ENCODE measurements at regions of chr5 and their contacts with region 1.

Region 1: GRCh38 chr5:135578685-135579341 is at the start of gene CXCL14:
- DNase-seq: no peak
- H3K4me3 ChIP-seq: peak within 1 kb of the TSS; percentile 23 to 54 (median 49)
- H3K27ac ChIP-seq: no peak within 1 kb of the TSS
- H3K4me1 ChIP-seq: peaks cover 28% of the 10 kb centered on the region
- H3K27me3 ChIP-seq: peaks cover 31% of the 10 kb centered on the region
- CTCF ChIP-seq: no peak
- polyA plus RNA-seq, gene CXCL14: 14.0 to 613 TPM (median 124 TPM) in 3 replicates

Region 2: GRCh38 chr5:135116160-135116561 is 462.7 kb before region 1 on chr5:
- dilution Hi-C with region 1: no loop called
- DNase-seq: no peak
- H3K4me3 ChIP-seq: no peak overlapping the region
- H3K27ac ChIP-seq: no peak overlapping the region
- H3K4me1 ChIP-seq: no peaks in the 10 kb centered on the region
- H3K27me3 ChIP-seq: peaks cover 8% of the 10 kb centered on the region
- CTCF ChIP-seq: no peak

Region 3: DNA sequence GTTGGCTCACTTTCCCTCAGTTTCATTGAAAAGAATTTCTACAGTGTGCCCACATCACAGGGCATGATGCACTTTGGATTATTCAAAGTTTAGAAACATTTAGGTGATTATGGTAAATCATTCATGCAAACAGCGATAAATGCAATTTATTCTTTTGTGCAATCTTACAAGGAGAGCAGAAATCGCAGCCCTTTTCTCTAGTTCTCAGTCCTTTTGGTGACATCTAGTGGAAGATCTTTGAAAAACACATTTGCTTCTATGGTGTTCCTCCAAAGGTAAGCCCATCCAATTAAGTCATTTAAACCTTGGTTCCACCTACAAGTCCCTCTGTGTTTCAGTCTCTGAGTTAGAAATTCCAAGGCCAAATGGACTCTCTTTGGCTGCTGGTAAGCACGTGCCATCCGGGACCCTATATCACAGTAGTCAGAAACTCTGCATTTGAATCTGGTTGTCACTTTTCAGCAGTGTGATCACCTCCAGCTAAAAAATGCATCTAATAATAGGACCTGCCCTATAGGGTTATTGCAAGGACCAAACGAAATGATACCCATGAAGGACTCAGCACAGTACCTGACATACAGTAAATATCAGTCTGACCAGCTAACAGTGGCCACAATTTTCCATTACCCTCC is 246.2 kb before region 1 on chr5:
- dilution Hi-C with region 1: no loop called
- DNase-seq: peak; percentile 19
- H3K4me3 ChIP-seq: no peak overlapping the region
- H3K27ac ChIP-seq: no peak overlapping the region
- H3K4me1 ChIP-seq: peaks cover 5% of the 10 kb centered on the region
- H3K27me3 ChIP-seq: no peaks in the 10 kb centered on the region
- CTCF ChIP-seq: peak; percentile 1 to 59 (median 36)

Region 4: GRCh38 chr5:135437796-135438560 is 140.8 kb before region 1 on chr5:
- dilution Hi-C with region 1: no loop called
- DNase-seq: no peak
- H3K4me3 ChIP-seq: no peak overlapping the region
- H3K27ac ChIP-seq: no peak overlapping the region
- H3K4me1 ChIP-seq: peaks cover 4% of the 10 kb centered on the region
- H3K27me3 ChIP-seq: peaks cover 25% of the 10 kb centered on the region
- CTCF ChIP-seq: no peak

Region 5: DNA sequence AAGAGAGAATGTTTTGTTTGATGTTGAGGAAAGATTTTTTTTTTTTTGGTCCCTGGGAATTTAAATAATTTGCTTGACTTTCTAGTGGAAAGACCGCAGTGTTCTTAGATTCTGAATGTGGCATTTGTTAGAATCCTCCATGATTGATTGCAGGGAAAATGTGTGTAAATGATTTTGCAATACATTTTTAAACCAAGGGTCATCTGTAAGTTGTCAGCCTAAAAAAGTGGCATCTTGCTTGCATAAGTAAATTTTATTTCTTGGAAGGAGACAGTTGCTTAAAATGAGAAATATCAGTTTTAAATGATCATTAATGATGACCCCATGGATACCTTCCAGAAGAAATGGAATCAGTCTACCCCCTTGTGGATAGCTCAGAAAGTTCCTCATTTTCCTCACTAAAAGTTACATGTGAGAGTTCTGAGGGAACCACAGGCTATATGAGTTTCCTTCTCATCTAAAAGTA is 150.5 kb after region 1 on chr5:
- dilution Hi-C with region 1: loop called (anchors 25 kb)
- DNase-seq: no peak
- H3K4me3 ChIP-seq: no peak overlapping the region
- H3K27ac ChIP-seq: no peak overlapping the region
- H3K4me1 ChIP-seq: peaks cover 5% of the 10 kb centered on the region
- H3K27me3 ChIP-seq: no peaks in the 10 kb centered on the region
- CTCF ChIP-seq: peak in 2 of 3 experiments; percentile 29 to 49

Region 6: DNA sequence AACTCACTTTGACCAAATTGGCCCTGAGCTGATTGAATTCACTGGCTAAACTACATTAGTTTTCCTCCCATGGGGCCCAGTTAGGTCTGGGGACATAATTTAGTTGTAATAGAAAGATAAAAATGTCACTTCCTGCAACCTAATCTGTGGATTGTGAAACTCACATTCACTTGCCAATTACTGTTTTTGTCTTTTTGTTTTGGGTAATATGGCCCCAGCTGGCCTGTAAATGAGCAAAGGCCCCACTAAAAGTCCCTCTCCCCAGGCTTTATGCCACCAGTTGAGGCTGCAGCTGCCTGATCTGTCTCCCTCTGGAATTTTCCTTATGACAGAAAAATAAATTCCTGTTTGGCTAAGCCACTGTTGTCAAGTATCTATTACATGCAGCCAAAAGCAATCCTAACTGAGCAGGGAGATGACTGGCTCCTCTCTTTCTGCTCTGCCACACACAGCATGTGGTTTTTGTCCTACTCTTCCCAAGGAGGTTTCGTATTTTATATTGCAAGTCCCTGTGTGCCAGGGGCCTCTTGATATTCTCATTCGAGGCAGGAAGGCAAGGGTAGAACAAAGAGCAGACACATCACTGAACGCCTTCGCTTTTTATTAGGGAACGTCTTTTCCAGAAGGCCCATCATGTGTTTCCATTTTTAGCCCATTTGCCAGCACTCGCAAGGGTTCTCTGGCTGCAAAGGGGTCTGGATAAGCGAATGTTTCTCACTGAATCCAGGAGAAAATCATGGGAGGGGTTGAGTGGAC is 231.6 kb after region 1 on chr5:
- dilution Hi-C with region 1: no loop called
- DNase-seq: no peak
- H3K4me3 ChIP-seq: no peak overlapping the region
- H3K27ac ChIP-seq: no peak overlapping the region
- H3K4me1 ChIP-seq: no peaks in the 10 kb centered on the region
- H3K27me3 ChIP-seq: no peaks in the 10 kb centered on the region
- CTCF ChIP-seq: no peak